CD8-positive, alpha-beta memory T cell (primary cell): ENCODE measurements at regions of chr10 and their contacts with region 1.

Region 1: DNA sequence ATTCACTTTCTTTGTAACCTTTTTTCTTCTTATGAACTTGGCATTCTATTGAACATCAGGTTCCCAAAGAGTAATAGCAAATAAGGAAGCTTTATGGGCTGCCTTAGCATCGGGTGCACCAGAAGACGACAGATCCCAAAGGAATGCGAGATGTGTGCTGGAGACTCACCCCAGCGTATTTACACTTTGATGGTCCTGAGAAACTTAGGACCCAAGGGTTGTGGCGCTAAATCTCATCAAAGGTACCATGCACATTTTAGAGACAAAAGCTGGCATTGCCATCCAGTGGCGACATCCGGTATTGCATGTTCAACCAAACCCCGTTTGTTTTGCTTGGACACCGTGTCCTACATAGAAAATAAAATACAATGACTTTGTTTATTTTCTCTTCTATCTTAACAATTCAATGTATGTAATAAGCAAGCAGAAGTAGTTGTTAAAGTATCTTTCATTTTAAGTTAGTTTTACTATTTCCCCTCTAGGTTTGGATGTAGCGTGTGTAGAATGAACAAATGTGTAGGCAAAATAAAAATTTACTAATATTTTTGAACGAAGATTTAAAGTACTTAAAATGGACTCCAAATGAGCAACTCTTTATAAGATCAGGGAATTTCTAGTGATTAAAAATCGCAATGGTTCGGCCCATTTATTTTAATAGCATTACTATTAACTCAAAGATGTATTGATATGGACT is 1154.8 kb downstream of the GATA3 start:
- DNase-seq: peak; percentile 34 to 71 (median 57)
- H3K4me3 ChIP-seq: no peak overlapping the region
- H3K4me3 Mint-ChIP-seq: no peak overlapping the region
- H3K27ac ChIP-seq: no peak overlapping the region
- H3K27ac Mint-ChIP-seq: no peak overlapping the region
- H3K4me1 ChIP-seq: no peaks in the 10 kb centered on the region
- H3K4me1 Mint-ChIP-seq: peaks cover 3 to 7% (median 4%) of the 10 kb centered on the region in 3 donors
- H3K27me3 ChIP-seq: no peaks in the 10 kb centered on the region
- H3K27me3 Mint-ChIP-seq: peaks cover 8 to 15% of the 10 kb centered on the region in 2 donors

Region 2: GRCh38 chr10:7872041-7872442 is 1337.2 kb before region 1 on chr10:
- CTCF ChIA-PET with region 1: interaction called, 14 read pairs
- POLR2A ChIA-PET with region 1: no interaction called
- DNase-seq: peak in 2 of 5 donors; percentile 9 to 29
- H3K4me3 ChIP-seq: no peak overlapping the region
- H3K4me3 Mint-ChIP-seq: peak overlapping the region in 5 of 7 donors; percentile 22 to 68 (median 58)
- H3K27ac ChIP-seq: no peak overlapping the region
- H3K27ac Mint-ChIP-seq: no peak overlapping the region
- H3K4me1 ChIP-seq: peaks cover 4% of the 10 kb centered on the region
- H3K4me1 Mint-ChIP-seq: peaks cover 19 to 43% (median 33%) of the 10 kb centered on the region in 3 donors
- H3K27me3 ChIP-seq: no peaks in the 10 kb centered on the region
- H3K27me3 Mint-ChIP-seq: no peaks in the 10 kb centered on the region

Region 3: DNA sequence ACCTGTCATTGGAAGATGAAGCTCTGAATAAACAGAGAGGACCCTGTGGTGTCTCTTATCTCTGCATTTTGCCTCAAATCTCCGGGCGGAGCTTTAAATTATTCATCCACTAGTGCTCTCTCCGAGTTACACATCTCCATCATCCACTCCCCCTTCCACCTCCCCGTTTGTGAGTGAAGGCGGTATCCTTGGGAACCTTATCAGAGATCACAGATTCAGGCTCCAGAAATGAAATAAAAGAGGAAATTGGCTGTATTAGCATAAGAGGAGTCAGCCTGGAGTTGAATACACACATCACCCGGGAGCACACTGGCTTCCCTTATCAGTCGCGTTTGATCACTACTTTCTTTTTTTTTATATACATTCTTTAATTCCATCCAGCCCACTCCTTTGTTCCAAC is 30.1 kb after region 1 on chr10:
- CTCF ChIA-PET with region 1: no interaction called
- POLR2A ChIA-PET with region 1: no interaction called
- DNase-seq: no peak
- H3K4me3 ChIP-seq: no peak overlapping the region
- H3K4me3 Mint-ChIP-seq: no peak overlapping the region
- H3K27ac ChIP-seq: no peak overlapping the region
- H3K27ac Mint-ChIP-seq: no peak overlapping the region
- H3K4me1 ChIP-seq: no peaks in the 10 kb centered on the region
- H3K4me1 Mint-ChIP-seq: no peaks in the 10 kb centered on the region
- H3K27me3 ChIP-seq: peaks cover 9% of the 10 kb centered on the region
- H3K27me3 Mint-ChIP-seq: peaks cover 9 to 46% of the 10 kb centered on the region in 2 donors